HAP-1 (cell line): ENCODE measurements at regions of chr2 and their contacts with region 1.

Region 1: GRCh38 chr2:158006961-158007719 is 94.5 kb upstream of the UPP2 start:
- DNase-seq: no peak
- H3K4me3 ChIP-seq: no peak overlapping the region
- H3K4me1 ChIP-seq: no peaks in the 10 kb centered on the region; the same call in 1 of the 2 replicates
- H3K27me3 ChIP-seq: peaks cover 9% of the 10 kb centered on the region

Region 2: DNA sequence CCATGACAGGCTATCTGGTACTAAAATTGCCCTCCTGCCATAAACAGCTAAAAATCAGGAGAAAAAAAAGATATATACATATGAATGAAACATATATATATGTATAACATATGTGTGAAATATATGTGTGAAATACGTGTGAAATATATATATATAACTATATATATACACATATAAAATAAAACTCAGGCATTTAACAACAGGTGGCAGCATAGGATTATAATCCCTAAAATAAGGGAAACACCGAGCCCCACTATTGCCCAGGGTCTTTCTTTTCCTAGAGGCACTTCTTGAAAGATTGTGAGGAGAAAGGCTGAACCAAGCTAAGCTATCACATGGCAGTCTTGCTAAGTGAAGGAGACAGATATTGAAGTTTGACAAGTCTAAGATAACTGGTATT is 497.4 kb before region 1 on chr2:
- in situ Hi-C with region 1: loop called (anchors 10 kb)
- DNase-seq: no peak
- H3K4me3 ChIP-seq: no peak overlapping the region
- H3K4me1 ChIP-seq: no peaks in the 10 kb centered on the region
- H3K27me3 ChIP-seq: peaks cover 44% of the 10 kb centered on the region

Region 3: GRCh38 chr2:157784169-157784822 is 222.8 kb before region 1 on chr2:
- in situ Hi-C with region 1: loop called (anchors 5 kb)
- DNase-seq: no peak
- H3K4me3 ChIP-seq: no peak overlapping the region
- H3K4me1 ChIP-seq: peaks cover 20% of the 10 kb centered on the region
- H3K27me3 ChIP-seq: no peaks in the 10 kb centered on the region